ENCODE measurements at regions of chr4 and their contacts with region 1.

Region 1: GRCh38 chr4:67545199-67546003 is at the start of gene CENPC:
- DNase-seq: peak; percentile 95 to 97 (median 96)
- H3K4me3 ChIP-seq: peak within 1 kb of the TSS; percentile 91
- H3K27ac ChIP-seq: peak within 1 kb of the TSS; percentile 76 to 83
- H3K4me1 ChIP-seq: peaks cover 3% of the 10 kb centered on the region
- H3K27me3 ChIP-seq: no peaks in the 10 kb centered on the region
- CTCF ChIP-seq: no peak
- EP300 ChIP-seq: no peak
- POLR2A ChIP-seq: peak; percentile 78
- total RNA-seq, gene CENPC: 23.1 to 46.7 (median 28.4) TPM

Region 2: DNA sequence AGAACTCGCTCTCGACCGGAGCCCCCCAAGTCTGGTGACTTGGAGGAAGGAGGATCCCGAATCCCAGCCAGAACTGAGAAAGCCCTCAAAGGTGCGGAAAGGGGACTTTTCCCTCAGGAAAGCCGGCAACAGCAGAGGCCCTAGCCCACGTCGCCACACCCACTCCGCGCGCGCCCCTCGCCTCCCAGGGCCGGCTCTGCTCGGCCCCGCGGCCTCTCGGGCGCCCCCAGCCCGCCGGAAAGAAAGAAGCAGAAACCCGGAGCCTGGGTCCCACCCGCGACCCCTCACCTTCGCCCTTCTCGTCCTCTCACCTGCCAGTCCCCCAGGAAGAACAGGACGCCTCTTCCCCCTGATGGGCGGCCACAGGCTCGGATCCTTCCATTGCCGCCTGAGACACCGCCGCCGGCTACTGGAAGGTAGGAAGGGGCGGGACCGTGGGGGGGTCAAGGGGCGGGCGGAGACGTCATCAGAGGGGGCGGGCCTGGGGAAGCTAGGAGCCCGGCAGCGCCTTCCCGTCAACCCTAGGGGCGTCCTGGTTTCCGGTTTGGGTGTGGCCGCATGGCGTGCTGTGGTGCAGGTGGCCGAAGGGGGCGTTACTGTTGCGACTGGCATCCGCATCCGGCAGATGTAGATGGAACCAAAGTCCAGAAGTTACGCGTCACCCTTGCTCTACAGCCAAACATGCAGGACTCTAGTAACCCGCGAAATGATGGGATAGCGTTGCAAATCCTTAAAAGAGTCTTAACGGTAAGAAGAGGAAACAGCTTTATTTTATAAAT is 155.5 kb after region 1 on chr4 and contains the start of gene UBA6:
- intact Hi-C with region 1: loop called in 1 of 4 experiments (anchors 10 kb)
- DNase-seq: peak; percentile 93 to 96 (median 95)
- H3K4me3 ChIP-seq: peak within 1 kb of the TSS; percentile 75
- H3K27ac ChIP-seq: peak within 1 kb of the TSS; percentile 76 to 83
- H3K4me1 ChIP-seq: no peaks in the 10 kb centered on the region
- H3K27me3 ChIP-seq: no peaks in the 10 kb centered on the region
- CTCF ChIP-seq: peak; percentile 33 to 53 (median 46)
- EP300 ChIP-seq: peak; percentile 40
- POLR2A ChIP-seq: peak; percentile 49
- total RNA-seq, gene UBA6: 33.4 to 51.7 (median 40.5) TPM